PC-3 (cell line): ENCODE measurements at regions of chr10 and their contacts with region 1.

Region 1: DNA sequence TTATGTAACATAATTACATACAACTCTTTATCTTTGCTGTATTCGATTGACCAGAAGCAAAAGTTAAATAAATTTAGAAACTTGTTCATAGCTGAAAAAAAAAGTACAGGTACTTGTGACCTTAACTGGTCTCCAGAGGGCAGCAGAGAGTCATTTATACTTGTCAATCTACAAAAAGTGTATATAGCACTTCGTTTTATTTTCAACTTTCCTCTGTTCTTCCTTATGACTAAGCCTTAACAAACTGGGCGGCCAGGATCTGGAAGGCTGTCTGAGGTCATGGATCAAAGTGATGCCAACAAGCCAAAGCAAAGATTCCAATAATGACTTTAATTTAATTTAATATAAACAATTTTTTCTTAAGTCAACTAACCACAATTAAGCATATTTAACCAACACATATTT is 29.8 kb downstream of the C10orf67 start:
- DNase-seq: peak; percentile 88
- ATAC-seq: peak; percentile 78
- H3K4me3 ChIP-seq: no peak overlapping the region
- H3K27ac ChIP-seq: no peak overlapping the region
- H3K4me1 ChIP-seq: 0 out of 2 replicates have a peak, but pooled peaks cover 5% of the 10 kb centered on the region
- H3K27me3 ChIP-seq: no peaks in the 10 kb centered on the region
- CTCF ChIP-seq: peak; percentile 76

Region 2: GRCh38 chr10:23438550-23439441 is 124.0 kb after region 1 on chr10 and contains the start of gene OTUD1:
- CTCF ChIA-PET with region 1: no interaction called
- POLR2A ChIA-PET with region 1: no interaction called
- intact Hi-C with region 1: loop called (anchors 5 kb)
- DNase-seq: peak; percentile 90
- ATAC-seq: peak; percentile 79
- H3K4me3 ChIP-seq: peak within 1 kb of the TSS; percentile 79
- H3K27ac ChIP-seq: peak within 1 kb of the TSS; percentile 66
- H3K4me1 ChIP-seq: peaks cover 34% of the 10 kb centered on the region
- H3K27me3 ChIP-seq: no peaks in the 10 kb centered on the region
- CTCF ChIP-seq: no peak
- total RNA-seq, gene OTUD1: 6.0 and 9.2 TPM in 2 replicates

Region 3: DNA sequence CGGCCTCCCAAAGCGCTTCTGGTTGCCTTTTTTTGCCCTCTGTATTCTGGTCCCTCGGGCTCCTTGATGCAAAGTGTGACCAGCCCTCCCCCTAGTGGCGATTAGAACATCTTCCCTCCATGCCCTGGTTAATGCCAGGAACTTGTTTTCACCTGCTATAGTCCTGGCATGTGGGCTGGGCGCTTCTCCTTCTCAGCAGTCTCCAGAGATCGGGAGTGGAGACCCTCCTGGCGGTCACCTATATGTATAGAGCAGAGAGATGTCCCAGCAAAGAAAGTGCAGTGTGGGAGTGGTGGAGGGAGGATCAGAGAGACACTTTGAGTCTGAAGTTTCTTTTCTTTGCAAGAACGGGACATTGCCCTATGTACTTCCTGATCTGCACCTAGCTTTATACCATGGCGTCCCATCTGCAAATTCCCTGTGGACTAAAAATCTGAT is 388.2 kb after region 1 on chr10:
- CTCF ChIA-PET with region 1: no interaction called
- POLR2A ChIA-PET with region 1: no interaction called
- intact Hi-C with region 1: loop called (anchors 1 kb)
- DNase-seq: peak; percentile 68
- ATAC-seq: peak; percentile 99
- H3K4me3 ChIP-seq: peak overlapping the region; percentile 55; the same call in 1 of the 2 replicates
- H3K27ac ChIP-seq: no peak overlapping the region
- H3K4me1 ChIP-seq: no peaks in the 10 kb centered on the region
- H3K27me3 ChIP-seq: no peaks in the 10 kb centered on the region
- CTCF ChIP-seq: peak; percentile 73